ENCODE measurements at regions of chr9 and their contacts with region 1.

Region 1: GRCh38 chr9:75027187-75028107 is 646 bp downstream of the CARNMT1 start:
- DNase-seq: peak; percentile 68
- CTCF ChIP-seq: no peak

Region 2: GRCh38 chr9:75013735-75014134 is 13.7 kb before region 1 on chr9:
- CTCF ChIA-PET with region 1: interaction called, 19 read pairs
- POLR2A ChIA-PET with region 1: interaction called, 5 read pairs
- DNase-seq: no peak
- CTCF ChIP-seq: no peak